Caco-2 (cell line): ENCODE measurements at regions of chr3 and their contacts with region 1.

Region 1: DNA sequence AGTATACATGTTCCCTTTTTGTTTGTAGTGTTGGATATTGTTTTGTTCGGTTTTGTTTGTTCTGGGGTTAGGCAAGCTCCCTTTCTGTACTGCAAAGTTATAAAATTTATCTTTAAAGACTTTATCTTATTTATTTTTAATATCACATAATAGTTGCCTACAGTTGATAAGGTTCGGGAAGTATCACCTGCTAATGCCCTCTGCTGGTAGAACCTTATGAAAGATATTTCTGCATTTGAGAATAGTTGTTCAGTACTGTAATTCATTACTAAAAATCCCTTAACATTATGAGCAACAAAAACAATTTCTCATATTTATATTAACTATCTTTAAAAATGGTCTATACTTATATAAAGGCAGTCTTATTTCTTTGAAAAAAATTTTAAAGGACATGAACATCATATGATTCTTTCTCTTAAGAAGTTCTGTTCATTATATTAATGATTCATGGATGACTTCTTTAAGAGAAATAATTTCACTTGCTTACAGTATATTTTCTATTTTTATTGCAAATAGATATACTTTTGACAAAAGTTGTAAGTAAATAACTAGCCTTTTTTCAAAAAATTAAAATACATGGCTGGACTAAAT is 1126.8 kb downstream of the SI start:
- DNase-seq: no peak
- H3K4me3 ChIP-seq: no peak overlapping the region
- H3K4me3 Mint-ChIP-seq: no peak overlapping the region
- H3K27ac Mint-ChIP-seq: no peak overlapping the region
- H3K4me1 ChIP-seq: no peaks in the 10 kb centered on the region
- H3K4me1 Mint-ChIP-seq: no peaks in the 10 kb centered on the region
- H3K27me3 ChIP-seq: no peaks in the 10 kb centered on the region
- H3K27me3 Mint-ChIP-seq: peaks cover 5% of the 10 kb centered on the region
- CTCF ChIP-seq: peak; percentile 21 to 39

Region 2: DNA sequence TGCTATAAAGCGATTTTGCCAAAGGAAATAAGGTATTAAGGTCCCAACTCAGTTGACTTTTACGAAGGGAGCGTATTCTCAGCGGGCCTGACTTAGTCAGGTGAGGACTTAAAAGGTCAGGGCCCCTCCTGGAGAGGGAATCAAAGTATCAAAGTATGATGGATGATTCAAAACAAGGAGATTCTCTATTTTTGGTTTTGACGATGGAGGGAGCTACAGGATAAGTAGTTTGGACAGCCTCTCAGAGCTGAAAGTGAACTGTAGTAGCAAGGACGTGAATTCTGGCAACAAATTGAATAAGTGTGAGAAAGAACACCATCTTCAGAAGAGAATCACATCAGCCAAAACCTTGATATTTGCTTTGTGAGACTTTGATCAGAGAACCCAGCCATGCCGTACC is 59.7 kb before region 1 on chr3:
- CTCF ChIA-PET with region 1: interaction called, 3 read pairs
- POLR2A ChIA-PET with region 1: no interaction called
- intact Hi-C with region 1: loop called (anchors 1 kb)
- DNase-seq: peak in 1 of 2 experiments; percentile 4
- H3K4me3 ChIP-seq: no peak overlapping the region
- H3K4me3 Mint-ChIP-seq: no peak overlapping the region
- H3K27ac Mint-ChIP-seq: no peak overlapping the region
- H3K4me1 ChIP-seq: no peaks in the 10 kb centered on the region
- H3K4me1 Mint-ChIP-seq: no peaks in the 10 kb centered on the region
- H3K27me3 ChIP-seq: no peaks in the 10 kb centered on the region
- H3K27me3 Mint-ChIP-seq: peaks cover 9% of the 10 kb centered on the region
- CTCF ChIP-seq: peak in 1 of 2 experiments; percentile 19